ENCODE measurements at regions of chr20 and their contacts with region 1.

Region 1: DNA sequence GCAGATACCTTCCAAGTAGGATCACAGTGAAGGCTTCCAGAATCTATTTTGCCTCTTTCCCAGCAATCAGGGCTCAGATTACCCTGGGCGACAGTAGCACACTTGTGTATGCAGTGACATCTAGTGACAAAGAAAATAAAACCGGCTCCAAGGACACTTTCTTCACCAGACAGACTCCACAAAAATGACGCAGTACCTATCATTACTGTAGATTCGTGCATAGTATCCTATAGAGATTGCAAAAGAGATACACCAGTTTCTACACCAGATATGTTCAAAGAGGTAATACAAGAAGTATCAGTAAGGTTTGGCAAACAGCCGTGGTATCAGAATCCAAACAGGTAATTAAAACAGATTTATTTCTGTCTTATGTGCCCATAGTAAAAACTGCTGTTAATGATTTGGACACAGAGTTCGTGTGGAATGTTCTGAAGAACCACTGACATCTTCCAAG is 600.4 kb upstream of the JAG1 start:
- DNase-seq: peak; percentile 61 to 79
- H3K4me3 ChIP-seq: no peak overlapping the region
- H3K4me1 ChIP-seq: peaks cover 3% of the 10 kb centered on the region; the same call in 1 of the 2 replicates
- H3K27me3 ChIP-seq: no peaks in the 10 kb centered on the region

Region 2: DNA sequence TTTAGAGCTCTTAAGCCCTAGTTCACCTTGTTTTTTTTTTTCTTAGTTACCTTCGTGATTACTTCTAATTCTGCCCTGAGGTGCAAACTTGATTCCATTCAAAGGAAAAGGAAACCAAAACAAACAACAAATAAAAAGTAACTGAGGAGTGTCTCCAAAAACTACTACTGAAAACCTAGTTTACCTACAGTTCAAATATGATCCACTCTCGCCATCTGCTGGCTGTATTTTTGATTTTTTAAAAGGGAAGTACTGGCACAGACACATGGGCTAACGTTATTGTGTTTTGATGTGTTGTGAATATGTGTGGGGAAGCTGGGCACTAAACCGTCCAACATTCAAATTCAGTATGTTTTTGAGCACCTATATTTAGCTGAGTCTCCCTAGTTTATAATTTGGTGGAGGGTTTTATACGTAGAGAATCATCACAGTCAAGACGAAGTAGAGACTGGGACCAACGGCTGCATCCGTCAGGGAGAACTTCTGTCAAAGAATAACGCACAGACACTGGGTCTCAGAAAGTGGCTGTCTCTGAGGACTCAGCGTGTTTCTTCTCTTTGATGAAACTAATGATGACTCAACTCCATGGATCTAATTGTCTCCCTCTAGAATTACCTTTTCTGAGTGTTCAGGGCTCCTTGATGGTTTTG is 270.0 kb after region 1 on chr20:
- in situ Hi-C with region 1: loop called (anchors 10 kb)
- DNase-seq: peak; percentile 70 to 71
- H3K4me3 ChIP-seq: no peak overlapping the region
- H3K4me1 ChIP-seq: peaks cover 12% of the 10 kb centered on the region
- H3K27me3 ChIP-seq: no peaks in the 10 kb centered on the region